Endothelial cell of umbilical vein (primary cell): ENCODE measurements at regions of chr11 and their contacts with region 1.

Region 1: GRCh38 chr11:96155627-96156378 is 187.2 kb downstream of the MAML2 start:
- DNase-seq: peak; percentile 92
- H3K4me3 ChIP-seq: no peak overlapping the region
- H3K27ac ChIP-seq: peak overlapping the region; percentile 93
- H3K4me1 ChIP-seq: peaks cover 38% of the 10 kb centered on the region
- H3K27me3 ChIP-seq: no peaks in the 10 kb centered on the region
- CTCF ChIP-seq: peak; percentile 29 to 30
- POLR2A ChIP-seq: no peak

Region 2: DNA sequence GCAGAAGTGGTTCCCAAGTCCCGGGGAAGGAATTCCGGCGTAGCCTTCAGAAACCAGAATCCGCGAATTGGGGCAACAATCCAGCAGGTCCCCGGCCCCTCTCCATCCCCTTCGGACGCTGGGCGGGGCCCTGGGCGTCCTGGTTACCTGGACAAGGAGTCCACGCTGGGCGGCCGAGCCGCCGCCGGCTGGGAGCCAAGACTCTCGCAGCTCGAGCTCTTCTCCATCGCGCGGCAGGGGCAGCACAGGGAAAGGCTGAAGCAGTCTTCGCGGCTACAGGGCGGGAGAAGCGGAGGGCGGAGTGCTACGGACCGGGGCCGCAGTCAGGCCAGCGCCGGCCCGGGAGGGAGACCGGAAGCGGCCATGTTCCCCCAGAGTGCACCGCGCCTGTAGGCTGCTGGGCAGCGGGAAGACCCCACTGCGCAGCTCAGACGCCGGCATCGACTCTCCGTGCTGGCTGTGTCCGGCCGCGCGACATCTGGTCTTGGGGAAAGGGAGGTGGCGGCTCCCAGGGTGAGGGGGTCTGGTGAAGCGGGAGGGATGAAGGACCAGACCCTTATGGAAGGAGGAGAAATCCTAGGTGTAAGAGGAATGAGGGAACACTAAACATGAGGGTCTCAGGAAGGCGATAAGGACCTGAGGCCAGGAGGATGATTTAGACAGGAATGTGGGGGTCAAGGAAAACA is 231.9 kb before region 1 on chr11 and contains the start of gene MTMR2:
- CTCF ChIA-PET with region 1: no interaction called
- POLR2A ChIA-PET with region 1: no interaction called
- dilution Hi-C with region 1: no loop called
- intact Hi-C with region 1: loop called (anchors 2 kb)
- DNase-seq: peak; percentile 82
- H3K4me3 ChIP-seq: peak within 1 kb of the TSS; percentile 92 to 99 (median 98)
- H3K27ac ChIP-seq: peak within 1 kb of the TSS; percentile 75
- H3K4me1 ChIP-seq: peaks cover 32% of the 10 kb centered on the region
- H3K27me3 ChIP-seq: no peaks in the 10 kb centered on the region
- CTCF ChIP-seq: no peak
- POLR2A ChIP-seq: peak; percentile 97
- total RNA-seq, gene MTMR2: 46.4 and 49.5 TPM in 2 replicates

Region 3: DNA sequence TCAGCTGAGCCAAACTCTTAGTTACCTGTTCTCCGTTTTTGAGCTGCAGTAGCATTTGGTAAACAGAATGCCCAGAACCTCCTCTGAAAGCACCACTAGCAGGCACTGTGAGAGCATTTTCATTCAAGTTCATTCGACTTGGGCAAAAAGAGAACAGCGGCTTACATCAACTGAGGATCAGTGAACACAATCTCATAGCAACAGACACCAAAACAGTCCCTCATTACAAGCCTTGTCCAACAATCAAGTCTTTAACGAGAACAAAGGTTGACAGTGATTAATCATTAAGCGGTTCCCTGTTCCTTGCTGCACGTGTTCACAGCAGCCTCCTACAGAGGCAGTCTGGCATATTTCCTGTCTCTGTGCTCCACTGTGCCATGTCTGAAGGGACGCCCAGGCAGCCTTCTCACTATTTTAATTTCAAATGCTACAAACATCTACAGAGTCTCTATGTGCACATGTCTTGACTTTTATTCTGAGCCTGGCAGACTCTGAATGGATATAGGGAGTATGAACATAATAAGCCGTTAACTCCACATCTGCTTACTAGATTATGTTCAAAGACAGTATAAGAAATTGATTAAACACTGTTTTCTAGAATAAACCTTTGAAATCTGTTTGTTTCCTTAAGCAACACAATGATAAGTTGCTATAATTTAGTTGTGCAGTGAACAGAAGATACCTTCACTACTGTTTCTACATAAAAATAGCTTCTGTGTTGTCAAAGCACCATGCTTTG is 143.5 kb before region 1 on chr11:
- CTCF ChIA-PET with region 1: interaction called, 4 read pairs
- POLR2A ChIA-PET with region 1: no interaction called
- dilution Hi-C with region 1: no loop called
- intact Hi-C with region 1: loop called (anchors 1 kb)
- DNase-seq: peak; percentile 85
- H3K4me3 ChIP-seq: no peak overlapping the region
- H3K27ac ChIP-seq: no peak overlapping the region
- H3K4me1 ChIP-seq: peaks cover 8% of the 10 kb centered on the region
- H3K27me3 ChIP-seq: no peaks in the 10 kb centered on the region
- CTCF ChIP-seq: peak; percentile 50 to 58
- POLR2A ChIP-seq: no peak